ENCODE measurements at regions of chr13 and their contacts with region 1.

Region 1: DNA sequence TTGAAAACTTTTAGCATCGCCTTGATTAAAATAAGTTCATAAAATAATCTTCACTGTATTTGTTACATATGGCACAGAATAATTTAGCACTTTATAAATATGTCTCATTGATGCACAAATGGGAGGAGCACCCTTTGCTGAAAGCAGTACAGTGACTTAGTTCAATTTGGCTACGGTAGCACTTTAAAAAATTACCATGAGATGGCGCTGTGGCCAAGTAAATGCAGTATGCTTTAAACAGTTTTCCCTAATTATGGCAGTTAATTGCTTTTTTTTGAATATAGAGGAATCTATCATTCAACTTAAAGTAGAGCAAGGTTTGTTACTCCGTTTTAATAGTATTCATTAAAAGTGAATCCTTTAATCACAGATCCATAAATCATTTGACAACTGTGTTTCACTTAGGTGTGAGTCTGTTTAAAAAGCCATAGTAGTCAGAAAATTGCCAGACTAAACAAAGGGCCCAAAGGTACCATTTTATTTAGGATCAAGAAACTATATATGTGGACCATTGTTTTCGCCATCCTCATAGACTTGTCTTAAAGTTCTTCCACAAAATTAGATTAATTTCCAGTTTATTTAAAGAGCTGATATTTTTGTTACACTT is 34.7 kb upstream of the ESD start:
- DNase-seq: peak; percentile 37
- H3K4me3 ChIP-seq: no peak overlapping the region
- H3K27ac ChIP-seq: no peak overlapping the region
- H3K4me1 ChIP-seq: no peaks in the 10 kb centered on the region
- H3K27me3 ChIP-seq: no peaks in the 10 kb centered on the region
- CTCF ChIP-seq: peak; percentile 78 to 79

Region 2: GRCh38 chr13:46553886-46554858 is 277.5 kb before region 1 on chr13:
- CTCF ChIA-PET with region 1: no interaction called
- dilution Hi-C with region 1: no loop called
- in situ Hi-C with region 1: no loop called
- intact Hi-C with region 1: no loop called
- DNase-seq: peak; percentile 89
- H3K4me3 ChIP-seq: peak overlapping the region; percentile 91 to 98 (median 96)
- H3K27ac ChIP-seq: peak overlapping the region; percentile 88
- H3K4me1 ChIP-seq: peaks cover 13% of the 10 kb centered on the region
- H3K27me3 ChIP-seq: no peaks in the 10 kb centered on the region
- CTCF ChIP-seq: peak; percentile 3 to 31

Region 3: DNA sequence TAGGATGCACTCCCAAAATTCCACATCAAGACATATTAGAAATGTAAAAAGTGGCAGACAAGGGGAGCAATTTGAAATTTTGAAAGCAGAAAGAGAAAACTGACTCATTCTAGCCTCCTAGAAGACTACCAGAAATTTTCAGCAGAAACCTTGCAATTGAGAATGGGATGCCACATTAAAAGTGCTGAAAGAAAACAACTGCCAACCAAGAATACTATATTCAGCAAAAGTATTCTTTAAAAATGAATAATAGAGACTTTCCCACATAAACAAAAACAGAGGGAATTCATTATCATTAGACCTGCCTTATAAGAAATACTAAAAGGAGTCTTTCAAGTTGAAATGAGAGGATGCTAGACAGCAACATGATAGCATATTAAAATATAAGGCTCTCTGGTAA is 143.5 kb after region 1 on chr13:
- CTCF ChIA-PET with region 1: interaction called, 7 read pairs
- dilution Hi-C with region 1: no loop called
- in situ Hi-C with region 1: no loop called
- intact Hi-C with region 1: loop called (anchors 2 kb)
- DNase-seq: no peak
- H3K4me3 ChIP-seq: no peak overlapping the region
- H3K27ac ChIP-seq: no peak overlapping the region
- H3K4me1 ChIP-seq: no peaks in the 10 kb centered on the region
- H3K27me3 ChIP-seq: no peaks in the 10 kb centered on the region
- CTCF ChIP-seq: no peak

Region 4: GRCh38 chr13:47598340-47598911 is 766.7 kb after region 1 on chr13:
- CTCF ChIA-PET with region 1: no interaction called
- dilution Hi-C with region 1: no loop called
- in situ Hi-C with region 1: no loop called
- intact Hi-C with region 1: loop called (anchors 1 kb)
- DNase-seq: no peak
- H3K4me3 ChIP-seq: no peak overlapping the region
- H3K27ac ChIP-seq: no peak overlapping the region
- H3K4me1 ChIP-seq: no peaks in the 10 kb centered on the region
- H3K27me3 ChIP-seq: peaks cover 2% of the 10 kb centered on the region
- CTCF ChIP-seq: peak; percentile 17 to 45

Region 5: GRCh38 chr13:47764817-47765216 is 933.1 kb after region 1 on chr13:
- CTCF ChIA-PET with region 1: no interaction called
- dilution Hi-C with region 1: no loop called
- in situ Hi-C with region 1: loop called in 1 of 2 experiments (anchors 10 kb)
- intact Hi-C with region 1: no loop called
- DNase-seq: no peak
- H3K4me3 ChIP-seq: no peak overlapping the region
- H3K27ac ChIP-seq: no peak overlapping the region
- H3K4me1 ChIP-seq: no peaks in the 10 kb centered on the region
- H3K27me3 ChIP-seq: peaks cover 2% of the 10 kb centered on the region
- CTCF ChIP-seq: no peak

Measured in mammary epithelial cell (primary cell).